MCF 10A (cell line): ENCODE measurements at regions of chr4 and their contacts with region 1.

Region 1: DNA sequence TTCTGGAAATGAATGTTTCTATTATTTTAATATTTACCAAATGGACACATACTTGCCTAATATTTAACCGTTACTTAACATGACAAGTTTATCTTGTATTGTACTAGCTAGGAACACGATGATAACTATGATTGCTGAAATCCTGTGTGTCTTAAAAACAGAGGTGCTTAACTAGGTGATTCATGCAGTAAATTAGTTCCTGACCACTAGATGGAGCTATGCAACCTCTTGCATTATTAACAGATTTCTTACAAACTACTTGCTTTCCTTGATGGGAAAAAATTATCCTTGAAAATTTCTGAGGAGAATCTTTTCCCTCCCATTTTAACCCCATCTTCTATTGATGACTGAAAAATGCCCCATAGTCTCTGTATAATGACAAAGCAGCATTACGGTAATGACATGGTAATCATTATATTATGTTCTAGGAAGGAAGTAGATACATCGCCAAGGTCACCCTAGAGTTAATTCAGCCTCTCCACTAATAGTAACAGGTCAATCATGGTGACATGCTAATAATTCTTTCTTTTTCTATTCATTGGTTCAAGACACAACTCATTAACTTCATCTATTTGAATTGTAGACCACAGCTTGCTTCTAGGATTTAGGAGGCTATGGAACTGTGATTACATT is 844.2 kb downstream of the RAPGEF2 start:
- DNase-seq: peak; percentile 77
- H3K4me3 Mint-ChIP-seq: no peak overlapping the region
- H3K27ac Mint-ChIP-seq: no peak overlapping the region
- H3K4me1 Mint-ChIP-seq: no peaks in the 10 kb centered on the region
- H3K27me3 Mint-ChIP-seq: no peaks in the 10 kb centered on the region
- CTCF ChIP-seq: peak; percentile 66

Region 2: DNA sequence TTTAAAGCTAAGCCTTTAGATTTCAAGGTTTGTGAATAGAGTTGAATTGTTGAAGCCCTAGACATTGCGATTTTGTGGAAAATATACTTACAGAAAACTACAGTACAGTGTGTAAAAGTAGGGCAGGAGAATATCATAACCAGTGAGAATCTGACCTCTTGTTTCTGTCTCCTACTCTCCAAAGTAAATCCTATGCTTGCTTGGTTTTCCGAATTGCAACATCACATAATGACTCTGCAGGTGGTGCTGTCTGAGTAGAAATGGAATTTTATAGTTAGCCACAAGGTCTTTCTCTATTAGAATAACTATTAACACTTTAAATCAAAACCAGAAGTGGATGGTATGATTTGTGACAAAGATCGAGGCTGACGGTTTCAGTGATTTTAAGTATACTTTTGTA is 338.7 kb before region 1 on chr4:
- CTCF ChIA-PET with region 1: no interaction called
- POLR2A ChIA-PET with region 1: no interaction called
- intact Hi-C with region 1: loop called (anchors 1 kb)
- DNase-seq: peak; percentile 57
- H3K4me3 Mint-ChIP-seq: no peak overlapping the region
- H3K27ac Mint-ChIP-seq: no peak overlapping the region
- H3K4me1 Mint-ChIP-seq: peaks cover 14% of the 10 kb centered on the region
- H3K27me3 Mint-ChIP-seq: no peaks in the 10 kb centered on the region
- CTCF ChIP-seq: peak; percentile 34

Region 3: GRCh38 chr4:159764343-159764952 is 182.7 kb before region 1 on chr4:
- CTCF ChIA-PET with region 1: interaction called, 4 read pairs
- POLR2A ChIA-PET with region 1: no interaction called
- intact Hi-C with region 1: loop called (anchors 2 kb)
- DNase-seq: peak; percentile 74
- H3K4me3 Mint-ChIP-seq: no peak overlapping the region
- H3K27ac Mint-ChIP-seq: no peak overlapping the region
- H3K4me1 Mint-ChIP-seq: no peaks in the 10 kb centered on the region
- H3K27me3 Mint-ChIP-seq: no peaks in the 10 kb centered on the region
- CTCF ChIP-seq: peak; percentile 56

Region 4: GRCh38 chr4:160175064-160175645 is 228.1 kb after region 1 on chr4:
- CTCF ChIA-PET with region 1: interaction called, 3 read pairs
- POLR2A ChIA-PET with region 1: no interaction called
- intact Hi-C with region 1: loop called (anchors 1 kb)
- DNase-seq: peak; percentile 19
- H3K4me3 Mint-ChIP-seq: no peak overlapping the region
- H3K27ac Mint-ChIP-seq: peak overlapping the region; percentile 13
- H3K4me1 Mint-ChIP-seq: peaks cover 14% of the 10 kb centered on the region
- H3K27me3 Mint-ChIP-seq: no peaks in the 10 kb centered on the region
- CTCF ChIP-seq: peak; percentile 7